Caki2 (cell line): ENCODE measurements at regions of chr21 and their contacts with region 1.

Region 1: GRCh38 chr21:45140346-45140940 is 66.1 kb downstream of the ADARB1 start:
- DNase-seq: peak; percentile 80

Region 2: DNA sequence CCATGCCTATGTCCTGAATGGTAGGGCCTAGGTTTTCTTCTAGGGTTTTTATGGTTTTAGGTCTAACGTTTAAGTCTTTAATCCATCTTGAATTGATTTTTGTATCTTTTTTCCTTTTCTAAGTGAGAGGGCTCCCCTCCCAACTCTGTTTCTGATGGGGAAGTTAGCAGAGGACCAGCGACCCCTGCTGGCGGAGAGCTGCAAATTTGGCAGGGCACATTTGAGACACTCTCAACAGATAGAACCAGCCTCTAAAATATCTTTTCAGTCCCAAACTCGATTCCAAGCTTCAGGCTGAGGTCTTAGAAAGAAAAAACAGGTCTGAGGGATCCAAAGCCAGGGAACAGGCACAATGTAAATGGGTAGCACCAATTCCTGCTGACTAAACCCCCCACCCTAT is 652.6 kb before region 1 on chr21:
- in situ Hi-C with region 1: loop called (anchors 25 kb)
- DNase-seq: no peak

Region 3: GRCh38 chr21:44817506-44817880 is 322.9 kb before region 1 on chr21:
- in situ Hi-C with region 1: loop called (anchors 25 kb)
- DNase-seq: peak; percentile 76

Region 4: DNA sequence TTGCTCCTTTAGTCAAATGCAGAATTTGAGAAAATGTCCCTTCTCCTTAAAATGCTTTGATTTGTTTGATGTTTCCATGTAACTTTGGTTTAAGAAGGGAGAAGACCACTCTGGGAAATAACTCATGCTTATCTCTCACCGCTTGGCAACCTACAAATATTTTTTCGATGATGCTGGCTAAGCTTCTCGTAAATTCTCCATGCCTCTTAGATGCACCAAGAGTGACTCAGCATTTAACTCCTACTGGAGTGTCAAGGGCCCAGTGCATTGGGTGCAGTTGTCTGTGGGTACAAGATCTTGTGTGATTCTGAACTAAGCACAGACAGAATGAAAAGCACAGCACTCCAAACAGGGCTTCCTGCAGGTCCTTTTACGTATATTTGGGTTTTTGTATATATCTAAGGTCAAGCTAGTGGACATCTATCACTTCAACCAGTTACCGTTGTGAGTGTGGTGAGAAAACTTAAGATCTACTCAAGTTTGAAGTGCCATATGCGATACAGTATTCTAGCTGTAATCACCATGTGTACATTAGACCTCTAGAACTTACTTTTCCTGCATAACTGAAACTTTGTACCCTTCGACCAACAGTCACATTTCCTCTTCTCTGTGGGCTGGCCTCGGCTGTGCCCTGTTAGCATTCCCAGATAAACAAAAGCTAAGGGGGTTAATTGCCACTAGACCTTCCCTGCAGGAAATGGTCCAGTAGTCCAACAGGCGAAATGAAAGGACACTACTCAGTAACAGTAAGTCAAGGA is 320.3 kb after region 1 on chr21:
- in situ Hi-C with region 1: no loop called
- DNase-seq: peak; percentile 50